PC-3 (cell line): ENCODE measurements at regions of chr3 and their contacts with region 1.

Region 1: GRCh38 chr3:104856743-104857142 is 510.0 kb upstream of the ALCAM start:
- DNase-seq: no peak
- ATAC-seq: no peak
- H3K4me3 ChIP-seq: no peak overlapping the region
- H3K27ac ChIP-seq: no peak overlapping the region
- H3K4me1 ChIP-seq: no peaks in the 10 kb centered on the region
- H3K27me3 ChIP-seq: no peaks in the 10 kb centered on the region
- CTCF ChIP-seq: no peak

Region 2: GRCh38 chr3:104873331-104873730 is 16.6 kb after region 1 on chr3:
- CTCF ChIA-PET with region 1: no interaction called
- POLR2A ChIA-PET with region 1: no interaction called
- intact Hi-C with region 1: loop called (anchors 1 kb)
- DNase-seq: peak; percentile 51
- ATAC-seq: peak; percentile 20; the same call in 1 of the 2 replicates
- H3K4me3 ChIP-seq: no peak overlapping the region
- H3K27ac ChIP-seq: no peak overlapping the region
- H3K4me1 ChIP-seq: no peaks in the 10 kb centered on the region
- H3K27me3 ChIP-seq: no peaks in the 10 kb centered on the region
- CTCF ChIP-seq: no peak